ENCODE measurements at regions of chr18 and their contacts with region 1.

Region 1: GRCh38 chr18:5295981-5296705 is 617 bp upstream of the ZBTB14 start:
- DNase-seq: peak; percentile 94 to 98 (median 98)
- H3K4me3 ChIP-seq: peak overlapping the region; percentile 80 to 97 (median 89)
- H3K27ac ChIP-seq: peak overlapping the region; percentile 64 to 89
- H3K4me1 ChIP-seq: peaks cover 8 to 26% (median 20%) of the 10 kb centered on the region in 4 experiments
- H3K27me3 ChIP-seq: no peaks in the 10 kb centered on the region

Region 2: DNA sequence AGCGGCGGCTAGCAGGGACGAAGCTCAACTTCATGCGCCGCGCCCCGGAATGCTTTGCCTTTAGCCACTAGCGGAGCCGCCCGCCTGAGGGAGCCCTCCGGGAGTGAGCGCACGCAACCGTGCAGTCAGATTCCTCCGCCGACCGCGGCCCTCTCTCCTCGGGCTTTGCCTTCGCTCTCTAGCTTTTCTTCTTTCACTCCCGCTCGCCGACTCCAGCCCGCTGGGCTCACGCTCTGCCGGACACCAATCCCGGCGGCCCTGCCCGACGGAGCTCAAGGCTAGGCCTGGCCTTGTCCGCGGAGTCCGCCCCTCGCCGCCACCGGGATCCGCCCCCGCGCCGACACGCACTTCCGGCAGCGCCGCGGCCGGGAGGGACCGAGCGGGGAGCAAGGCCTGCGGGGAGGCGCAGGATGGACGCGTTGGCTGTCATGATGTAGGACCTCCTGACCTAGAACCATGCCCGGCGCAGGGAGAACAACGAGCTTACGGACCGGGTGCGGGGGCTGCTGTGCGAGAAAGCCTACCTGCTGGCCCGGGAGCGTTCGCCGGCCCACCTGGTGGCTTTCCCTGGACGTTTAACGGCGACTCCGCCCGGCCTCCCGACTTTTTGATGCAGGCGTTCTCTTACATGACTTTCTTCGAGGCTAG is 58.3 kb before region 1 on chr18:
- CTCF ChIA-PET with region 1: interaction called, 14 read pairs
- POLR2A ChIA-PET with region 1: interaction called, 28 read pairs
- DNase-seq: peak; percentile 90 to 96 (median 94)
- H3K4me3 ChIP-seq: peak overlapping the region; percentile 64 to 89 (median 86)
- H3K27ac ChIP-seq: peak overlapping the region; percentile 96 to 99
- H3K4me1 ChIP-seq: peaks cover 17 to 24% (median 19%) of the 10 kb centered on the region in 4 experiments
- H3K27me3 ChIP-seq: no peaks in the 10 kb centered on the region

Region 3: DNA sequence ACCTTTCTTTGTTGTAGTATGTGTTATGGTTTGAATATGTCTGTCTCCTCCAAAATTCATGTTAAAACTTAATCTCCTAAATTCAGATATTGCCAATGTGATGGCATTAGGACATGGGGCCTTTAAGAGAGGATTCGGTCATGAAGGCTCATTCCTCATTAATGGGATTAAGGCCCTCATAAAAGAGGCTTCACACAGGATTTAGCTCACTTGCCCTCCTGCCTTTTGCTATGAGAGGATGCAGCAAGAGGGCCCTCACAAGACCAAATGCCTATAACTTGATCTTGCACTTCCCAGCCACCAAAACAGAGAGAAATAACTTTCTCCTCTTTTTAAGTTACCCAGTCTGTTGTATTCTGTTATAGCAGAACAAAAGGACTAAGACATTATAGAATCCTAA is 20.3 kb before region 1 on chr18:
- CTCF ChIA-PET with region 1: no interaction called
- POLR2A ChIA-PET with region 1: no interaction called
- DNase-seq: no peak
- H3K4me3 ChIP-seq: no peak overlapping the region
- H3K27ac ChIP-seq: no peak overlapping the region
- H3K4me1 ChIP-seq: no peaks in the 10 kb centered on the region
- H3K27me3 ChIP-seq: no peaks in the 10 kb centered on the region

Region 4: DNA sequence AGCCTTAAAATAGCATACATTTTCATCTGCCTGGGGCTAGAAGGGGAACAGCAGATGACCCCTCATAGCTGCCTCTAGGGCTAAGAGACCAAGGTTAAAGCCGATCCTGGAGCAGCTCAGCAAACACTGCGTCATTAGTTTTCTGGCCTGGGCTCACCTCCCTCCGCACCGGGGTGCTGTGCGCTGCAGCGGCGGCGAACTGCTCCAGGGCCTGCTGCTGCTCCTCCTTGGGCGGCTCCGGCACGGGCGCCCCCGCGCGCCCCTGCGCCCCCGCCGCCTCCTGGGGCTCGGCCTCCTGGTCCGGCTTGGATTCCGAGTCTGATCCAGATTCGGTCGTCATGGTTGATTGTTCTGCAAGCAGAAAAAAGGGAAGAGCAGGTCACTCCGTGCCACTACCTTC is 192.7 kb after region 1 on chr18:
- CTCF ChIA-PET with region 1: no interaction called
- POLR2A ChIA-PET with region 1: no interaction called
- DNase-seq: no peak
- H3K4me3 ChIP-seq: no peak overlapping the region
- H3K27ac ChIP-seq: no peak overlapping the region
- H3K4me1 ChIP-seq: no peaks in the 10 kb centered on the region
- H3K27me3 ChIP-seq: no peaks in the 10 kb centered on the region

Region 5: DNA sequence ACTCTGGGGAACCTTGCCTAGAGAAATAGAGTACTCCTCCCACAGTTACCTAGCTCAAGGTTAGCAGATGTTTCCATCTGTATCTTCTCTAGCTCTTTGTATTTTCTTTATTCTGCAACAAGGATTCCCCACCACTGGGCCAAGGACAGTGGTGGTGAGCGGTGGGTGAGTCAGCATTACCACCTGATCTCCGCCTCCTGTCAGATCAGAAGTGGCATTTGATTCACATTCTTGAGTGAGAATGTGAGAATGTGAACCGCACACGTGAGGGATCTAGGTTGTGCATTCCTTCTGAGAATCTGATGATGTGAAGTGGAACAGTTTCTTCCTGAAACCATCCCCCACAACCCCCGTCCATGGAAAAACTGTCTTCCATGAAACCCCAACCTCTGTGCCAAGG is 238.7 kb after region 1 on chr18:
- CTCF ChIA-PET with region 1: no interaction called
- POLR2A ChIA-PET with region 1: no interaction called
- DNase-seq: no peak
- H3K4me3 ChIP-seq: no peak overlapping the region
- H3K27ac ChIP-seq: no peak overlapping the region
- H3K4me1 ChIP-seq: no peaks in the 10 kb centered on the region
- H3K27me3 ChIP-seq: no peaks in the 10 kb centered on the region

Region 6: DNA sequence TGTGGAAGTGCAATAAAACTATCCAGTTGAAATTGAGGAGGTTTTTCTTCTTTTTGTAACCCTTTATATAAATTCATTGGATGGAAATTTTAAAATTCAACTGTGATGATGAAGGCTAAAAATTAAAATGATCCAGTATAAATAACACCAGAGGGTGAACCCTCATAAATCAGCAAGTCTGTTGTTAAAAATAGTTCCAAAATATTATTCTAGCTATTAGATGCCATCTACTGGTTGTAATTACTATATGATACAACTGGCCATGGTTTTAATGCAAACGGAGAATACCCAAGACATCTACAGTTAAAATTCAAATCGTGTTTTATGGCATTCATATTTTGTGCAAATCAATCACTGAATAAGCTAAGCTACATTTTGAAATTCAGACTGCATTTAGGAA is 545.4 kb after region 1 on chr18:
- CTCF ChIA-PET with region 1: no interaction called
- POLR2A ChIA-PET with region 1: no interaction called
- DNase-seq: peak in 1 of 3 donors; percentile 2
- H3K4me3 ChIP-seq: no peak overlapping the region
- H3K27ac ChIP-seq: no peak overlapping the region
- H3K4me1 ChIP-seq: no peaks in the 10 kb centered on the region
- H3K27me3 ChIP-seq: peaks cover 0 to 7% (median 3%) of the 10 kb centered on the region in 5 experiments

Measured in common myeloid progenitor, CD34-positive (primary cell).